ENCODE measurements at regions of chrX and their contacts with region 1.

Region 1: DNA sequence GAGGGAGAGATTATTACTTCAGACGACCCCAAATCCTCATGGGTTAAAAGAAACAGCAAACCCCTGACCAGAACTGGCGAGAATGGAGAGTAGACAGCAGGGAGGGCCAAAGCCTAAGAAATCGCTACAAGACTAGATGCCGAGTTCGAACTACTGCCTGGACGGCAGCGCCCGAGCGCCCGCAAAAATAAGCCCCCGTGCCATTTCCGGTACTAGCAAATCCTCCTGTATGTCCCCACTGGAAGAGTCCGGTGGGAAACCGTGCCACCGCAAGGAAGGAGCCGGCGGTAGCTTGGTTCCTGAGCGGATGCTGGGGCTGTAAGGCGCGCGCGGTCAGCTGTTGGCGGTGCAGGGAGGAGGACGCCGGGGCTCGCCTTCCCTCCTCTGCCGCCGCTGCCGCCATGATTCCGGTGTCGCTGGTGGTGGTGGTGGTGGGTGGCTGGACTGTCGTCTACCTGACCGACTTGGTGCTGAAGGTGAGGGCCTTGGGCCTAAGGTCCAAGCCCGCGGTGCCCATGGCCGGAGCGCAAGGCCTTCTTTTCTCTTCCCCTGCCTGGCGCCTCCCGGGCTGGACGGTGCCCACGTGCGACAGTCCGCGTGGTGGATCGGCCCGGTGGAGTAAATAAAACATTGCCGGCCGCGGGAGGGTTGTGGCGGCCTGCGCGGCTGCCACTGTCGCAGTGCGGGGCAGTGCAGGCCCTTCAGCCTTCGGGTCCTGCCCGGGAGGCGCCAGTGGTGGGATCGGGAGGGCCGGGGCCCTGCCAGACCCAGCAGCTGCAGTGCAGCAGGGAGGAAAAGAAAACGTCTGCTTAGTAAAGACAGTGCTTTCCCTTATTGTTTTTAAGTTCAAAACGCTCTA is at the start of gene MBTPS2:
- DNase-seq: peak; percentile 88
- H3K4me3 Mint-ChIP-seq: peak within 1 kb of the TSS; percentile 84
- H3K27ac Mint-ChIP-seq: peak within 1 kb of the TSS; percentile 90
- H3K4me1 Mint-ChIP-seq: peaks cover 14% of the 10 kb centered on the region
- H3K27me3 Mint-ChIP-seq: no peaks in the 10 kb centered on the region
- total RNA-seq, gene MBTPS2: 5.1 to 6.5 TPM

Region 2: GRCh38 chrX:21926527-21927278 is 87.1 kb after region 1 on chrX:
- CTCF ChIA-PET with region 1: no interaction called
- POLR2A ChIA-PET with region 1: no interaction called
- intact Hi-C with region 1: loop called (anchors 1 kb)
- DNase-seq: no peak
- H3K4me3 Mint-ChIP-seq: no peak overlapping the region
- H3K27ac Mint-ChIP-seq: peak overlapping the region; percentile 62
- H3K4me1 Mint-ChIP-seq: peaks cover 32% of the 10 kb centered on the region
- H3K27me3 Mint-ChIP-seq: no peaks in the 10 kb centered on the region

Region 3: GRCh38 chrX:21940356-21940829 is 100.8 kb after region 1 on chrX and contains the start of gene SMS:
- CTCF ChIA-PET with region 1: no interaction called
- POLR2A ChIA-PET with region 1: interaction called, 5 read pairs
- intact Hi-C with region 1: loop called (anchors 1 kb)
- DNase-seq: peak; percentile 72
- H3K4me3 Mint-ChIP-seq: peak within 1 kb of the TSS; percentile 84
- H3K27ac Mint-ChIP-seq: peak within 1 kb of the TSS; percentile 88
- H3K4me1 Mint-ChIP-seq: peaks cover 25% of the 10 kb centered on the region
- H3K27me3 Mint-ChIP-seq: no peaks in the 10 kb centered on the region
- total RNA-seq, gene SMS: 119 to 120 TPM

Region 4: DNA sequence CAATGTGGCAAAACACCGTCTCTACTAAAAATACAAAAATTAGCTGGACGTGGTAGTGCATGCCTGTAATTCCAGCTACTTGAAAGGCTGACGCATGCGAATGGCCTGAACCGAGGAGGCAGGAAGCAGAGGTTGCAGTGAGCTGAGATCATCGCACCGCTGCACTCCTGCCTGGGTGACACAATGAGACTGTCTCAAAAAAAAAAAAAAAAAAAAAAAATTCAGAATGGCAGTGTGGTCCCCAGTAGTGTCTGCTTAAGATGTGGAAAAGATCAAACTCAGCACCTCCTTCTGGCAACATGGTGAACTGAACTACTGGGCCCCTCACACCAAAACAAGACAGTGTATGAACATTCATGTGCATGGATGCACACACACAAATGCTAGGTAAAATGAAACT is 133.2 kb after region 1 on chrX:
- CTCF ChIA-PET with region 1: interaction called, 4 read pairs
- POLR2A ChIA-PET with region 1: no interaction called
- intact Hi-C with region 1: loop called (anchors 1 kb)
- DNase-seq: peak; percentile 64
- H3K4me3 Mint-ChIP-seq: no peak overlapping the region
- H3K27ac Mint-ChIP-seq: peak overlapping the region; percentile 87
- H3K4me1 Mint-ChIP-seq: peaks cover 35% of the 10 kb centered on the region
- H3K27me3 Mint-ChIP-seq: no peaks in the 10 kb centered on the region

Region 5: GRCh38 chrX:22314631-22315062 is 475.1 kb after region 1 on chrX:
- CTCF ChIA-PET with region 1: no interaction called
- POLR2A ChIA-PET with region 1: no interaction called
- intact Hi-C with region 1: no loop called
- DNase-seq: no peak
- H3K4me3 Mint-ChIP-seq: no peak overlapping the region
- H3K27ac Mint-ChIP-seq: no peak overlapping the region
- H3K4me1 Mint-ChIP-seq: no peaks in the 10 kb centered on the region
- H3K27me3 Mint-ChIP-seq: peaks cover 4% of the 10 kb centered on the region

Measured in activated CD4-positive, alpha-beta memory T cell treated with anti-CD3 and anti-CD28 coated beads for 36 hours (primary cell).